ENCODE measurements at regions of chr1 and their contacts with region 1.

Region 1: DNA sequence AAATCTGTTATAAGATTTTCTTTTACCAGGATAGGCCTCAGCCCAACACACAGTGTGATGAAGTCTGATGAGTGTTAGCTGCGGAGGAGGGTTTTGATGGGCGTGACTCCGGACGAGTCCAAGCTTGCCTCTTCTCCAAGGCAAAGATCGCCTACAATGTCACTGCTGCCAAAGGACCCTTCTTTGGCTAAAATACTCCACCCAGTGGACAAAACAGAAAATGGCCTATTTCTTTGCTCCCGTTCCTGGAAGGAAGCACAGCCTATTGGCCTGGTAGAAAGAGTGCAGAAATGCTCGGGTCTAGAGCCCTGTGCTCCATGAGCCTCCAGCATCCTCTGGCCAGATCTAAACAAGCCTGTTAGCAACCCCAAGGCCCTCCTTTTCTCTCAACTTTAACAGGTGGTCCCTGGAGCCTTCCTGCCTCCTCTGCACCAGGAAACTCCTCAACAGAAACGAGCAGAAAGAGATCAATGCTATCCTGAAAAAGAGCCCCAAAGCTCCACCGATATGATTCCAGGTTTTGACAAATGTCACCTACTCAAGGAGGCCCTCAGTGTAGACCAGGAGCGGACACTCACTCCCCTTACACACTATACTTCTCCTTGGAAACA is 3.4 kb upstream of the CASQ2 start:
- DNase-seq: peak; percentile 47
- H3K4me3 ChIP-seq: no peak overlapping the region
- H3K27ac ChIP-seq: no peak overlapping the region
- H3K4me1 ChIP-seq: no peaks in the 10 kb centered on the region
- CTCF ChIP-seq: peak; percentile 76

Region 2: GRCh38 chr1:115717541-115717940 is 54.4 kb before region 1 on chr1:
- CTCF ChIA-PET with region 1: no interaction called
- POLR2A ChIA-PET with region 1: no interaction called
- intact Hi-C with region 1: loop called (anchors 10 kb)
- DNase-seq: peak; percentile 31
- H3K4me3 ChIP-seq: no peak overlapping the region
- H3K27ac ChIP-seq: no peak overlapping the region
- H3K4me1 ChIP-seq: no peaks in the 10 kb centered on the region
- CTCF ChIP-seq: peak; percentile 72

Region 3: DNA sequence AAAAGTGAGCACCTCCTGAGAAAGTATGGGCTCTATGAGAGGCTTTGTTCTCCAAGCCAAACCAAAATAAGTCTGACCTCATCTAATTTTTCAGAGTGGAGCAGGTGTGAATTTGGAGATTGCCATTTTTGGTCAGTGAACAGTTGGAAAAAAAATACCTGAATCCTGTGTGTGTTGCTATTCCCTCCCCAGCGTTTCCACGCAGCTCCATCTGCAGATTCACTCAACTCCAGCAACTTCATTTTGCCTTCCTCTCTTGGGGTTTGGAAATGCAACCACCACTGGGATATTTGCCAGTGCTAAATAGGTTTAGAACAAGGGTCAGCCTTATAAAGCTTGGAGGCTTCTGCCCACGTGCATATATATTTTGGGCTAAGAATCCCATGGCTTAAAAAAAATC is 14.6 kb before region 1 on chr1:
- CTCF ChIA-PET with region 1: no interaction called
- POLR2A ChIA-PET with region 1: no interaction called
- intact Hi-C with region 1: no loop called
- DNase-seq: no peak
- H3K4me3 ChIP-seq: no peak overlapping the region
- H3K27ac ChIP-seq: no peak overlapping the region
- H3K4me1 ChIP-seq: no peaks in the 10 kb centered on the region
- CTCF ChIP-seq: no peak

Region 4: GRCh38 chr1:115949156-115949555 is 177.2 kb after region 1 on chr1:
- CTCF ChIA-PET with region 1: no interaction called
- POLR2A ChIA-PET with region 1: no interaction called
- intact Hi-C with region 1: no loop called
- DNase-seq: no peak
- H3K4me3 ChIP-seq: no peak overlapping the region
- H3K27ac ChIP-seq: no peak overlapping the region
- H3K4me1 ChIP-seq: peaks cover 6% of the 10 kb centered on the region
- CTCF ChIP-seq: no peak

Measured in OCI-LY7 (cell line).